ENCODE measurements at regions of chr11 and their contacts with region 1.

Region 1: GRCh38 chr11:111777094-111778046 is 11.2 kb upstream of the PPP2R1B start:
- DNase-seq: peak; percentile 23
- H3K4me3 Mint-ChIP-seq: no peak overlapping the region
- H3K27ac Mint-ChIP-seq: no peak overlapping the region
- H3K4me1 Mint-ChIP-seq: no peaks in the 10 kb centered on the region
- H3K27me3 Mint-ChIP-seq: no peaks in the 10 kb centered on the region

Region 2: DNA sequence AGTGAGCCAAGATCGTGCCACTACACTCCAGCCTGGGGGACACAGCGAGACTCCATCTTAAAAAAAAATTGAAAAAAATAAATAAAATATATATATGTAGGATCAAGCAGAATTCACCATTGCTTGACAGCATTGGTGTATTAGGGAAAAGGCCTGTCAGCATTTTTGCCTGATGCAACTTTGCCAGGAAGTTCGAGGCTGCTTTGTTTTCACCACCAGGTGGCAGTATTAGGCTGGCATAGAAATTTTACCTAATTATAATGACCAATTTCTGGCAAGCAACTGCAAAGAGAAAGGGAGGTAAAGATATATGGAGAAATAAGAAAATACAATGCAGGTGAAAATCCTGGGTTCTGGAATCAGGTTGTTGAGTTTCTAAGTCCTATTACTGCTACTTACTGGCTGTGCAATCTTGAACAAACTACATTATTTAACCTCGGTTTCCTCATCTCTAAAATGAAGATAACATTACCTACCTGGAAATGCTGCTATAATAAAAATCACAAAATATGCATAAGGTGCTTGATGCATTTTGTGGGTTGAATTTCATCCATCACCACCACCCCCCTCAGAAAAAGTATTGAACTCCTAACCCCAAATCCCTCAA is 212.2 kb before region 1 on chr11:
- CTCF ChIA-PET with region 1: interaction called, 11 read pairs
- POLR2A ChIA-PET with region 1: no interaction called
- DNase-seq: peak; percentile 69
- H3K4me3 Mint-ChIP-seq: no peak overlapping the region
- H3K27ac Mint-ChIP-seq: no peak overlapping the region
- H3K4me1 Mint-ChIP-seq: no peaks in the 10 kb centered on the region
- H3K27me3 Mint-ChIP-seq: no peaks in the 10 kb centered on the region

Region 3: GRCh38 chr11:111586388-111586831 is 191.0 kb before region 1 on chr11:
- CTCF ChIA-PET with region 1: interaction called, 68 read pairs
- POLR2A ChIA-PET with region 1: no interaction called
- DNase-seq: peak; percentile 40
- H3K4me3 Mint-ChIP-seq: no peak overlapping the region
- H3K27ac Mint-ChIP-seq: no peak overlapping the region
- H3K4me1 Mint-ChIP-seq: no peaks in the 10 kb centered on the region
- H3K27me3 Mint-ChIP-seq: peaks cover 4% of the 10 kb centered on the region

Region 4: GRCh38 chr11:111601979-111602864 is 175.1 kb before region 1 on chr11 and contains the start of gene SIK2:
- CTCF ChIA-PET with region 1: interaction called, 16 read pairs
- POLR2A ChIA-PET with region 1: interaction called, 3 read pairs
- DNase-seq: peak; percentile 89
- H3K4me3 Mint-ChIP-seq: peak within 1 kb of the TSS; percentile 89
- H3K27ac Mint-ChIP-seq: peak within 1 kb of the TSS; percentile 76
- H3K4me1 Mint-ChIP-seq: peaks cover 25% of the 10 kb centered on the region
- H3K27me3 Mint-ChIP-seq: no peaks in the 10 kb centered on the region
- total RNA-seq, gene SIK2: 7.7 to 10.8 TPM

Region 5: GRCh38 chr11:111766093-111766833 is 11.1 kb before region 1 on chr11 and contains the start of gene PPP2R1B:
- CTCF ChIA-PET with region 1: interaction called, 48 read pairs
- POLR2A ChIA-PET with region 1: interaction called, 9 read pairs
- DNase-seq: peak; percentile 73
- H3K4me3 Mint-ChIP-seq: peak within 1 kb of the TSS; percentile 100
- H3K27ac Mint-ChIP-seq: peak within 1 kb of the TSS; percentile 96
- H3K4me1 Mint-ChIP-seq: peaks cover 37% of the 10 kb centered on the region
- H3K27me3 Mint-ChIP-seq: no peaks in the 10 kb centered on the region
- total RNA-seq, gene PPP2R1B: 51.3 to 55.7 TPM

Region 6: DNA sequence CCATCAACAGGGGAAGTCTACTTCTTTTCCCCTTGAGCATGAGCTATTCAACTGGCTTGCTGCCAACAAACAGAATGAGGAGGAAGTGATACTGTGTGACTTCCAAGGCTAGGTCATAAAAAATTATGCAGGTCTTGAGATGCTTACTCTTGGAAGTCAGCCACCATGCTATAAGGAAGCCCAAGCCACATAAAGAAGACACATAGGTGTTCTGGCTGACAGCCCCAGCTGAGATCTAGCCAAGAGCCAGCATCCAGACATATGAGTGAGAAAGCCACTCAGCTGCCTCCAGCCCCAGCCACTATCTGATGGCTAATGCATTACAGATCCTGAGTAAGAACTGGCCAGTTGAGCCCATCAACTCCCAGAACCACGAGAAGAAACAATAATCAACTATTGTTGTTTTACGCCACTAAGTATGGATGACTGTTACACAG is 19.8 kb after region 1 on chr11:
- CTCF ChIA-PET with region 1: interaction called, 13 read pairs
- POLR2A ChIA-PET with region 1: no interaction called
- DNase-seq: no peak
- H3K4me3 Mint-ChIP-seq: no peak overlapping the region
- H3K27ac Mint-ChIP-seq: no peak overlapping the region
- H3K4me1 Mint-ChIP-seq: peaks cover 7% of the 10 kb centered on the region
- H3K27me3 Mint-ChIP-seq: no peaks in the 10 kb centered on the region

Region 7: DNA sequence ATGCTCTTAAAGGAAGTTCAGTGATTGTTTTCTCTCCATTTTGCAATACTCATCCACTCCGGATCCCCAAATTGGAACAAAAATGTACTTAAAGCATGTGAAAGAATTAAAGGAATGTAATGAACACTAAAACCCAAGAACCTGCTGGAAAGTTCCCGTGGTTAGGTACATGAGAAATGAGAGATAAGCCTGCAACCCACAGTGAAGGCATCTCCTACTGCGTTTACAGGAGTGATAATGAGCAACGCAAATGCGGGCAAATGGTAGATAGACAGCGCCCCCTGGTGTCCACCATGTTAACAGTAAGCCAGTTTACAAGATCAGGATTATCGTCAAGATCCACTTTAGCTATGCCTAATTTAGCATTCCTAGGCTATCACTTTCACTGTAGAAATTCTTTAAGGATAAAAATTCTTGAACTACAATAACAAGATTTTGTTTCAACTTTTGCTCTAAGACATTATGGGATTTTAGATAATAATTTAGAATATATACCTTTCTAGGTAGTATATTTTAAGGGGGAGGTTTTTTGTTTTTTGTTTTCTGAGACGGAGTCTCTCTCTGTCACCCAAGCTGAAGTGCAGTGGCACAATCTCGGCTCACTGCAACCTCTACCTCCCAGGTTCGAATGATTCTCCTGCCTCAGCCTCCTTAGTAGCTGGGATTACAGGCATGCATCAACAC is 64.1 kb after region 1 on chr11:
- CTCF ChIA-PET with region 1: interaction called, 25 read pairs
- POLR2A ChIA-PET with region 1: no interaction called
- DNase-seq: peak; percentile 88
- H3K4me3 Mint-ChIP-seq: no peak overlapping the region
- H3K27ac Mint-ChIP-seq: no peak overlapping the region
- H3K4me1 Mint-ChIP-seq: peaks cover 10% of the 10 kb centered on the region
- H3K27me3 Mint-ChIP-seq: no peaks in the 10 kb centered on the region